CD8-positive, alpha-beta T cell (primary cell): ENCODE measurements at regions of chr5 and their contacts with region 1.

Region 1: DNA sequence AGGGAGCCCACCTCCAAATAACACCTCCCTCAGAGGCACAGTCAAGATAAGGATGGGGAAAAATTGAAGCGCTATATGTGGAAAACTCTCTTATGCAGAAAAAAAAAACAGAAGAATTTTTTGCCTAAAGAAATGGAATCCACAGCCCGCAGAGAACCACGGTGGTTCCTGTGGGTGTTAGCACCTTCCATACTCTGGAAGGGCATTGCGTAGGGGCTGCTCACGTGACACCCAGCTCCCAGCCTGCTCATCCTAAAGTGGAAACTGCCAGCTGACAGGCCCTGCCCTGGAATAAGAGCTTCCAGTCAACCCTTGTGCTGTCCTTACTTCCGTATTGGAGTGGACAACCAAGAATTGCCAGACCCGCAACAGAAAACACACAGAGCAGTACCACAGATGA is 142.5 kb downstream of the FSTL4 start:
- DNase-seq: no peak
- ATAC-seq: no peak
- H3K4me3 ChIP-seq: no peak overlapping the region
- H3K4me3 Mint-ChIP-seq: no peak overlapping the region
- H3K27ac ChIP-seq: no peak overlapping the region
- H3K27ac Mint-ChIP-seq: no peak overlapping the region
- H3K4me1 ChIP-seq: peaks cover 13% of the 10 kb centered on the region
- H3K4me1 Mint-ChIP-seq: peaks cover 6% of the 10 kb centered on the region
- H3K27me3 ChIP-seq: no peaks in the 10 kb centered on the region
- H3K27me3 Mint-ChIP-seq: peaks cover 9% of the 10 kb centered on the region
- CTCF ChIP-seq: no peak

Region 2: GRCh38 chr5:133610489-133611356 is 140.9 kb after region 1 on chr5:
- CTCF ChIA-PET with region 1: no interaction called
- POLR2A ChIA-PET with region 1: no interaction called
- intact Hi-C with region 1: loop called in 1 of 2 experiments (anchors 5 kb)
- DNase-seq: peak in 4 of 9 experiments; percentile 18 to 40 (median 31)
- ATAC-seq: peak; percentile 38
- H3K4me3 ChIP-seq: peak overlapping the region; percentile 14 to 54
- H3K4me3 Mint-ChIP-seq: peak overlapping the region; percentile 72
- H3K27ac ChIP-seq: no peak overlapping the region
- H3K27ac Mint-ChIP-seq: no peak overlapping the region
- H3K4me1 ChIP-seq: peaks cover 5% of the 10 kb centered on the region
- H3K4me1 Mint-ChIP-seq: peaks cover 14% of the 10 kb centered on the region
- H3K27me3 ChIP-seq: peaks cover 3 to 17% of the 10 kb centered on the region in 2 experiments
- H3K27me3 Mint-ChIP-seq: peaks cover 57% of the 10 kb centered on the region
- CTCF ChIP-seq: no peak